CD14-positive monocyte (primary cell): ENCODE measurements at regions of chr5 and their contacts with region 1.

Region 1: DNA sequence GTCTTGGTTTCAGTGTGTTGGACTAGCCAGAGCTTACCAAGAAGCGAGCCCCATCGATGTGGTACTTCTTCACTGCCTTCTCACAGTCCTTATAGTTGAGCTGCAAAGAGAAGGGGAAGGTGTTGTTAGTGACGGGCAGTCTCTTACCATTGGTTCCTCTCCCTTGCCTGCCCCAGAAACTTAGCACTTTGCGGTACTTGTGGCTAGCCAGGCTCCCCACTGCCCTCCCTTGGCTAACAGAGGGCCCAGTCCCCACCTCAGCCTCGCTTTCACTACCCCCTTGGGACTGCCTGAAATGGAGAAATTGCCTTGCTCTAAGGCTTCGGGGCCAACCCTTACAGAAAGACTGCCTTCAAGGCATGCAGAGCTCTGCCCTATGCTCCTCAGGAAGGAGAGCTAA is 4.3 kb downstream of the LCP2 start:
- DNase-seq: peak; percentile 89 to 93 (median 93)
- H3K4me3 ChIP-seq: peak overlapping the region in 2 of 3 experiments; percentile 93 to 97
- H3K4me3 Mint-ChIP-seq: peak overlapping the region; percentile 99 to 100
- H3K27ac ChIP-seq: peak overlapping the region; percentile 66 to 95
- H3K27ac Mint-ChIP-seq: peak overlapping the region; percentile 89 to 100 (median 93)
- H3K4me1 ChIP-seq: peaks cover 82 to 85% of the 10 kb centered on the region in 2 donors
- H3K4me1 Mint-ChIP-seq: peaks cover 83% of the 10 kb centered on the region
- H3K27me3 ChIP-seq: no peaks in the 10 kb centered on the region
- H3K27me3 Mint-ChIP-seq: peaks cover 0 to 4% (median 2%) of the 10 kb centered on the region in 3 donors
- CTCF ChIP-seq: no peak

Region 2: GRCh38 chr5:170312666-170313065 is 19.4 kb after region 1 on chr5:
- intact Hi-C with region 1: loop called in 1 of 2 experiments (anchors 2 kb)
- DNase-seq: peak; percentile 99 to 100 (median 100)
- H3K4me3 ChIP-seq: peak overlapping the region; percentile 22 to 45 (median 24)
- H3K4me3 Mint-ChIP-seq: peak overlapping the region; percentile 71 to 87
- H3K27ac ChIP-seq: peak overlapping the region; percentile 91 to 97
- H3K27ac Mint-ChIP-seq: peak overlapping the region; percentile 97 to 100 (median 98)
- H3K4me1 ChIP-seq: peaks cover 76 to 78% of the 10 kb centered on the region in 2 donors
- H3K4me1 Mint-ChIP-seq: peaks cover 79% of the 10 kb centered on the region
- H3K27me3 ChIP-seq: no peaks in the 10 kb centered on the region
- H3K27me3 Mint-ChIP-seq: peaks cover 0 to 6% (median 2%) of the 10 kb centered on the region in 3 donors
- CTCF ChIP-seq: no peak

Region 3: DNA sequence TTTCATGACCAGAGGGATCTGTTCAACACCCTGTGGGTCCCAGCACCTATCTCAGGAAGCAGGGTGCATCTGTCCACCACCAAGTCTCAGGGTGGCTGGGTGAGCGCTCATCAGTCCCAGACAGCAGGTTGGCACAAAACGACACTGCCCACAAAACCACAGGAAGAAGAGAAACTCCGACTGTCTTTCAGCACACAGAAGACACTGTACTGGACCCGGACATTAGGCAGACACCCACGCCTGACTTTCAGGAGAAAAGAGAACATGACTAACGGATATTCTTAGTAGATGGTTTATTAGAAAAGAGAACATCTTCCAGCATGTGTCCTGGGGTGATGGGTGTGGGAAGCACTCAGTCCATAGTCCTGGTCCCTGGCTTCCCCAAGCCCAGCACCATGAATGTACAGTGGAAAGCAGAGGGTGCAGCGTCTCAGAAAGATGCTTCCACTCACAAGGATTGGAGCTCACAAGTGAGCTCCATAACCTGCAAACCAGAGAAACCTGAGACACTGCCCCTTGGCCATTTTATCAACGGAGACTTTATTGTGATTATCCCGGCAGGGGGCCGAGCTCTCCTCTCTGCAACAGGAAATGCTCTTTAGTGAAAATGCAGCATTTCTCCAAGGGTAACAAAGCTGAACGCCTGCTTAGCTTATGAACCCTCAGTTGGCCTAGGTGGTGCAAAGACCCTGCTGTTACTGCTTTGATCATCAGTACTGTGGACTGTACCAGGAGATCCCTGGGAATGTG is 40.1 kb after region 1 on chr5:
- intact Hi-C with region 1: loop called (anchors 5 kb)
- DNase-seq: peak; percentile 74 to 83 (median 79)
- H3K4me3 ChIP-seq: peak overlapping the region in 1 of 3 experiments; percentile 31
- H3K4me3 Mint-ChIP-seq: peak overlapping the region; percentile 57 to 73
- H3K27ac ChIP-seq: peak overlapping the region; percentile 83 to 85
- H3K27ac Mint-ChIP-seq: peak overlapping the region in 1 of 7 donors; percentile 54
- H3K4me1 ChIP-seq: peaks cover 88 to 96% of the 10 kb centered on the region in 2 donors
- H3K4me1 Mint-ChIP-seq: peaks cover 72% of the 10 kb centered on the region
- H3K27me3 ChIP-seq: no peaks in the 10 kb centered on the region
- H3K27me3 Mint-ChIP-seq: peaks cover 0 to 15% (median 6%) of the 10 kb centered on the region in 3 donors
- CTCF ChIP-seq: no peak

Region 4: GRCh38 chr5:170338933-170339779 is 45.9 kb after region 1 on chr5:
- intact Hi-C with region 1: loop called (anchors 5 kb)
- DNase-seq: peak in 2 of 3 donors; percentile 76 to 83
- H3K4me3 ChIP-seq: no peak overlapping the region
- H3K4me3 Mint-ChIP-seq: no peak overlapping the region
- H3K27ac ChIP-seq: peak overlapping the region in 1 of 2 donors; percentile 39
- H3K27ac Mint-ChIP-seq: peak overlapping the region; percentile 3 to 89 (median 63)
- H3K4me1 ChIP-seq: peaks cover 62 to 66% of the 10 kb centered on the region in 2 donors
- H3K4me1 Mint-ChIP-seq: peaks cover 62% of the 10 kb centered on the region
- H3K27me3 ChIP-seq: no peaks in the 10 kb centered on the region
- H3K27me3 Mint-ChIP-seq: peaks cover 0 to 9% (median 3%) of the 10 kb centered on the region in 3 donors
- CTCF ChIP-seq: peak; percentile 84